Activated CD8-positive, alpha-beta T cell treated with anti-CD3 and anti-CD28 coated beads for 36 hours (primary cell): ENCODE measurements at regions of chr6 and their contacts with region 1.

Region 1: DNA sequence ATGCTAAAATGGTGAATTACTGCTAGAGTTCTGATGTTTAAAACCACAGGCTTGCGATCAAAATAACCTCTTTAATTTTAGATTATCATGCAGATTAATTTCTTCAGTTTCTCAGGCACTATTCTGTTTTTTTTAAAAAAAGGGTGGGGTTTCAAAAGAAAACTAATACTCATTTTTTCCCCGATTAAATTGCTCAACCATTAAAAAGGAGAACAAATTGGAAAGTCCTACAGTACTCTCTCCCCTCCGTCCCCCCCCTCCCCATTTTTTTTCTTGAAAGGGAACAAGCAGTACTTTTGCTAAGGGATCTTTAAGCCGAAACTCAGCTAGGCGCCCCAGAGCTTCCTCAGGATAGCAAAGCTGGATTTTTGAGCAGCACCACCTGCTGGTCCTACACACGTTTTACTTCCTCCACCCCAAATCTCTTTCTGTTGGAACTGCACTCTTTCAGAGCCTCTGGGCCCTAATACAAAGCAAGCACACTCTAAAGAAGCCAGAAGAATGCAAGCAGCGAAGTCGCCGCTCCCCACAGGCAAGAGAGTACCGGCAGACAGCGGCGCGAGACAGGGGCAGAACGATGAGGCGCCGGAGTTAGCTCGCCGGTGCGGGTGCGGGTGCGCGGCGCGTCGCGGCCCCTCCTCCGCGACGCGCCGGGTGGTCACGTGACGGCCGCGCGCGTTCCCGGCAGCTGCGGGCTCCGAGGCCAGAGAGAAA is at the start of gene RNF146:
- DNase-seq: peak; percentile 73
- ATAC-seq: peak; percentile 76
- H3K4me3 Mint-ChIP-seq: peak within 1 kb of the TSS; percentile 93
- H3K27ac Mint-ChIP-seq: peak within 1 kb of the TSS; percentile 100
- H3K4me1 Mint-ChIP-seq: peaks cover 30% of the 10 kb centered on the region
- H3K27me3 Mint-ChIP-seq: no peaks in the 10 kb centered on the region
- CTCF ChIP-seq: peak; percentile 84
- total RNA-seq, gene RNF146: 12.5 to 13.2 TPM

Region 2: GRCh38 chr6:127291495-127291894 is 25.2 kb after region 1 on chr6:
- CTCF ChIA-PET with region 1: interaction called, 18 read pairs
- POLR2A ChIA-PET with region 1: interaction called, 5 read pairs
- intact Hi-C with region 1: no loop called
- DNase-seq: no peak
- ATAC-seq: peak; percentile 73
- H3K4me3 Mint-ChIP-seq: no peak overlapping the region
- H3K27ac Mint-ChIP-seq: peak overlapping the region; percentile 44
- H3K4me1 Mint-ChIP-seq: peaks cover 44% of the 10 kb centered on the region
- H3K27me3 Mint-ChIP-seq: no peaks in the 10 kb centered on the region
- CTCF ChIP-seq: no peak